HEK293T (cell line): ENCODE measurements at regions of chr10 and their contacts with region 1.

Region 1: GRCh38 chr10:6593241-6593671 is 13.2 kb upstream of the PRKCQ start:
- DNase-seq: no peak

Region 2: DNA sequence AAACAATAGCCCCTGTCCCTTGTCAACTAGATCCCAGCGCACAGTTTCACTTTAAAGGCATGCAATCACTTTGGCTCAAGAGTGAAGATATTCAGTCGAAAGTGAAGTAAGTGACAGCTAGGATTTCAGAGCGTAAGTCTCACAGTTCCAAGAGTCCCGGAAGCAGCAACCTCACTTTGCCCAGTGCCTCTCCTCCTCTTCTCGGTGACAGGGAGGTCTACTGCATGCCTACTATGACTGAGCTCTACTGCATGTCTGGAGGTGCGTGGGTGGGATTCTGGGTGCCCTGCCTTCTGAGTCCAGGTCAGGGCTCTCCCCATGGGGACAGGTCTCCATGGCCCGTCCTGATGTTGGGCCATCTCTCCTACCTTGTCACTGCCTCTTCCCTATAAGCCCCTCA is 30.2 kb before region 1 on chr10:
- CTCF ChIA-PET with region 1: no interaction called
- POLR2A ChIA-PET with region 1: no interaction called
- DNase-seq: no peak

Region 3: DNA sequence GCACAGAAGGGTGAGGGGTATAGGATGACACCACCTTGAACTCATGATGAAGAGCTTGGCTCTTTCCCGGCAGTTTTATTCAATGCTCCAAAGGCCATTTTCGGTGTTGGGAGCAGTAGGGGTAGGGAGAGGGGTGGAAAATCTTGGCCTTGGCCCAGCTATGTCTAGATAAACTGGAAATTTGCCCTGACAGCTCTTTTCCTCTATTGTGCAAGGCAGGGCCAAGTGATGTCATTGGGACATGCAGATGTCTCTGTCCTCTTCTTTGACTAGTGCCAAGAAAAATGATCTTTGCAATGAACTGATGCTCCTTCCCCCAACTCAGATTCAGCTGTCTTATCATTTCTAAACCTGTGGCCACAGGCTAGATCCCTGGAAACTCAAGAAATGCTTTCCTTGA is 14.5 kb after region 1 on chr10:
- CTCF ChIA-PET with region 1: no interaction called
- POLR2A ChIA-PET with region 1: no interaction called
- DNase-seq: no peak

Region 4: GRCh38 chr10:6667679-6668270 is 74.5 kb after region 1 on chr10:
- CTCF ChIA-PET with region 1: interaction called, 10 read pairs
- POLR2A ChIA-PET with region 1: no interaction called
- DNase-seq: peak; percentile 55